A549 (cell line): ENCODE measurements at regions of chr15 and their contacts with region 1.

Region 1: GRCh38 chr15:50003786-50004334 is 115.2 kb downstream of the ATP8B4 start:
- DNase-seq: peak; percentile 92
- ATAC-seq: peak; percentile 100
- H3K4me3 ChIP-seq: no peak overlapping the region
- H3K27ac ChIP-seq: peak overlapping the region; percentile 65 to 85
- H3K4me1 ChIP-seq: peaks cover 19% of the 10 kb centered on the region
- CTCF ChIP-seq: peak; percentile 95
- EP300 ChIP-seq: no peak
- POLR2A ChIP-seq: no peak
- RAD21 ChIP-seq: peak; percentile 98

Region 2: GRCh38 chr15:49235446-49236124 is 768.3 kb before region 1 on chr15:
- CTCF ChIA-PET with region 1: interaction called, 16 read pairs
- POLR2A ChIA-PET with region 1: no interaction called
- DNase-seq: peak in 1 of 2 experiments; percentile 56
- ATAC-seq: peak in 1 of 2 experiments; percentile 85; a peak in 3 of 6 replicates
- H3K4me3 ChIP-seq: no peak overlapping the region
- H3K27ac ChIP-seq: peak overlapping the region in 1 of 2 experiments; percentile 50; a peak in 2 of 6 replicates
- H3K4me1 ChIP-seq: peaks cover 9% of the 10 kb centered on the region
- CTCF ChIP-seq: peak; percentile 67
- EP300 ChIP-seq: no peak
- POLR2A ChIP-seq: no peak
- RAD21 ChIP-seq: peak; percentile 78 to 82

Region 3: DNA sequence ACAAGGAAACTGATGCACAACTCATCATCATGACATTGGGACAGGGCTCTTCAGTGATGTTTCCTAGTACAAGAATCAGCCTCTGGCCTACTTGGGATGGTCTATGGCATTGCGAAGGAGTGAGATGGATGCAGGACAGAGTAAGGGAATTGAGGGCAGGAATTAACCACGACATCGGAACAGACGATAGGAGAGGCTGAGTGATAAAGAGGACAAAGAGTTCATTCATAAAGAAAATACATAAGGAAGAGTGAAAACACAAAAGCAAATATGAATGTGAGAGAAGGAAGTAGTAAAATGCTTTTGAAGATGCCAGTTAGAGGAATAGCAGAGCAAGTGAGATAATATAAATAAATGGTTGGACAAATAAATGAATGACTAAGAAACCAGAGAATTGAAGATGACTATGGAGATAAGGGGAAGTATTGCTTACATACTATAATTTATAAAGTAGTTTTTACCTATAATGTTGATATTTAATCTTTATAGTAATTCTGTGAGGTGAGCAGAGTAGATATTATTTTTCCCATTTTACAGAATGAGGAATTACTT is 179.8 kb before region 1 on chr15:
- CTCF ChIA-PET with region 1: no interaction called
- POLR2A ChIA-PET with region 1: no interaction called
- DNase-seq: peak in 1 of 2 experiments; percentile 63
- ATAC-seq: peak in 1 of 2 experiments; percentile 87; a peak in 4 of 6 replicates
- H3K4me3 ChIP-seq: no peak overlapping the region
- H3K27ac ChIP-seq: peak overlapping the region; percentile 17 to 57; a peak in 4 of 6 replicates
- H3K4me1 ChIP-seq: peaks cover 16% of the 10 kb centered on the region
- CTCF ChIP-seq: no peak
- EP300 ChIP-seq: no peak
- POLR2A ChIP-seq: no peak
- RAD21 ChIP-seq: no peak

Region 4: DNA sequence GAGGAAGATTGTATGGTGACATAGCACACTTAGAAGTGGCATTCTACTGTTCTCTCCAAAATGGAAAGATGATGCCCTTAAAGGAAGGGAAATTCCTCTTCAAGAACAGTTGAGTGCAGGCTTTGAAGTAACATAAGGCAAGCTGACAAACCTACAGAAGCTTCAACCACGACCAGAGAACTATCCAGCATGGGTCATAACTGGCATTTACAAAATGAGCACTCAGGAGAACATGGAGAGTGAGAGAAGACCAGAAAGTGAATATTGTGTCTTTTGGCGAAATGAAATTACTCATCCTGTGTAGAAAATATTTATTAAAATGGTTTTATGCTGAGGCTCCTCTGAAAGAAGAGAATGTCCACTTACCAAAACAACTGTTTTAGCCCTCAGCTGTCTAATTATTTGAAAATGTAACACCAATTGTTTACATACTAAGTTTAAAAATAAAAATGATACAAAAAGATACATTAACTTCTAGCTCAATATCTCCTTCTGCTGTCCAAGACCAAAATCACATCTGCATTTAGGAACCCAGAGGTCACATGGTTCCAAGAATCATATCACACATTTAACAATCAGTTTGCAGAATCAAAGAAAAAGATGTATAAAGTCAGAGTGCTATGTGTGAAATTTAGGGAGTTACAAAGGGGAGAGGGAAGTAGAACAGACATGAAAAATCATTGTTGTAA is 101.7 kb before region 1 on chr15:
- CTCF ChIA-PET with region 1: interaction called, 33 read pairs
- POLR2A ChIA-PET with region 1: interaction called, 4 read pairs
- DNase-seq: peak in 1 of 2 experiments; percentile 49
- ATAC-seq: peak in 1 of 2 experiments; percentile 66; a peak in 3 of 6 replicates
- H3K4me3 ChIP-seq: no peak overlapping the region
- H3K27ac ChIP-seq: peak overlapping the region; percentile 73 to 84
- H3K4me1 ChIP-seq: peaks cover 57% of the 10 kb centered on the region
- CTCF ChIP-seq: peak; percentile 72
- EP300 ChIP-seq: no peak
- POLR2A ChIP-seq: no peak
- RAD21 ChIP-seq: peak; percentile 78 to 85

Region 5: GRCh38 chr15:49918121-49918520 is 85.7 kb before region 1 on chr15:
- CTCF ChIA-PET with region 1: no interaction called
- POLR2A ChIA-PET with region 1: no interaction called
- DNase-seq: no peak
- ATAC-seq: no peak
- H3K4me3 ChIP-seq: no peak overlapping the region
- H3K27ac ChIP-seq: no peak overlapping the region
- H3K4me1 ChIP-seq: peaks cover 7% of the 10 kb centered on the region; the same call in 1 of the 3 replicates
- CTCF ChIP-seq: no peak
- EP300 ChIP-seq: no peak
- POLR2A ChIP-seq: no peak
- RAD21 ChIP-seq: no peak

Region 6: GRCh38 chr15:49979705-49980382 is 24.0 kb before region 1 on chr15:
- CTCF ChIA-PET with region 1: interaction called, 22 read pairs
- POLR2A ChIA-PET with region 1: no interaction called
- DNase-seq: no peak
- ATAC-seq: no peak
- H3K4me3 ChIP-seq: no peak overlapping the region
- H3K27ac ChIP-seq: no peak overlapping the region
- H3K4me1 ChIP-seq: no peaks in the 10 kb centered on the region
- CTCF ChIP-seq: no peak
- EP300 ChIP-seq: no peak
- POLR2A ChIP-seq: no peak
- RAD21 ChIP-seq: no peak

Region 7: DNA sequence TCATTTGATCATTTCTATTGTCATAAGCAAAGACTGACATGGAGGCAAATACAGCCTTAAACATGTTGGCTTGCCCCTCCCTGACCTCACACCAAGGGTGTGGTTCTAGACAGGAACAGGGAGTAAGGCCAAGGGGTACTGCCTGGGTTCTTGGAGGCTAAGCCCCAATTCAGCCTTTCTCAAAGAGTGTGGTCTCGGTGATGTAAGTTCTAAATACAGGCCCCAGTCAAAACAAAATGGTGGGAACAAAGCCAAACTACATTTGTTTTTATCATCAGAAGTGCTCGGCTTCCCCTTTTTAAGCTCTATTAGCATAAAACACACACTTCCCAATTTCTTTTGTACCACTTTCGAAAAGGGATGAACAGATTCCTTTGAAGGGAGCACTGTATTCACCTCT is 14.4 kb before region 1 on chr15:
- CTCF ChIA-PET with region 1: interaction called, 22 read pairs
- POLR2A ChIA-PET with region 1: no interaction called
- DNase-seq: no peak
- ATAC-seq: no peak
- H3K4me3 ChIP-seq: no peak overlapping the region
- H3K27ac ChIP-seq: no peak overlapping the region
- H3K4me1 ChIP-seq: no peaks in the 10 kb centered on the region
- CTCF ChIP-seq: no peak
- EP300 ChIP-seq: no peak
- POLR2A ChIP-seq: no peak
- RAD21 ChIP-seq: no peak

Region 8: GRCh38 chr15:50017522-50017921 is 13.7 kb after region 1 on chr15:
- CTCF ChIA-PET with region 1: interaction called, 10 read pairs
- POLR2A ChIA-PET with region 1: no interaction called
- DNase-seq: no peak
- ATAC-seq: no peak
- H3K4me3 ChIP-seq: no peak overlapping the region
- H3K27ac ChIP-seq: no peak overlapping the region
- H3K4me1 ChIP-seq: no peaks in the 10 kb centered on the region
- CTCF ChIP-seq: no peak
- EP300 ChIP-seq: no peak
- POLR2A ChIP-seq: no peak
- RAD21 ChIP-seq: no peak

Region 9: DNA sequence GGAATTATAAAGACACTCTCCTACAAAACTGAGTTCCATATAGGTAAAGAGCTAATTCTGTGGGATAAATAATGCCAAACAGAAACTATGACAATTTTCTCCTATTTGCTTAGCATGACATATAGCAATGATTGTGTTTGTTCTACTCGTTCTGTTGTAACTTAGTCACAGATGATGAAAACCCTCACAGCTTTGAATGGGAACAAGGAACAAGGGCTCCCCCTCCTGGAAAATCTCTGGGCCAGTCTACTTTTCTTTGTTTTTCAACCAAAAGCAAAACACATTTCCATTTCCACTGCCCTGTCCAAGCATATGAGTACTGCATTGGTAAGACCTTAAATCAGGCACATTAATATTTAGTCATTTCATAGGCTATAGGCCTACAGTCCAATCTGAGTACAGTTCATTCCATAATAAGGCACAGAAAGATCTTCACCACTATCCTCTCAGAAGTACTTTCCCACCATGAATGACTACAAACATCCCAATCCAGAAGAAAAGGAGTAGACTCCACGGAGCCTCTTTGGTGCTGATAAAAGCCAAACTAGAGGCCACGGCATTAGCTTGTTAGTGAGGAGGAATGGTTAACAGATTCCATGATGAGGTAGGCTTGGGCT is 48.1 kb after region 1 on chr15:
- CTCF ChIA-PET with region 1: interaction called, 40 read pairs
- POLR2A ChIA-PET with region 1: no interaction called
- DNase-seq: peak; percentile 49 to 87
- ATAC-seq: peak; percentile 90 to 95
- H3K4me3 ChIP-seq: no peak overlapping the region; the same call in 2 of the 3 replicates
- H3K27ac ChIP-seq: peak overlapping the region; percentile 61 to 77
- H3K4me1 ChIP-seq: peaks cover 21% of the 10 kb centered on the region
- CTCF ChIP-seq: peak; percentile 97
- EP300 ChIP-seq: peak in 1 of 2 experiments; percentile 24; a peak in 1 of 5 replicates
- POLR2A ChIP-seq: no peak
- RAD21 ChIP-seq: peak; percentile 98 to 99